GM23248 (cell line): ENCODE measurements at regions of chr10 and their contacts with region 1.

Region 1: GRCh38 chr10:101569838-101570766 is 18.0 kb downstream of the POLL start:
- DNase-seq: peak; percentile 85
- H3K4me3 ChIP-seq: peak overlapping the region; percentile 70
- H3K27ac ChIP-seq: no peak overlapping the region
- H3K4me1 ChIP-seq: no peaks in the 10 kb centered on the region
- H3K27me3 ChIP-seq: peaks cover 30% of the 10 kb centered on the region

Region 2: GRCh38 chr10:101095542-101096213 is 474.4 kb before region 1 on chr10:
- in situ Hi-C with region 1: no loop called
- DNase-seq: peak; percentile 74
- H3K4me3 ChIP-seq: no peak overlapping the region
- H3K27ac ChIP-seq: no peak overlapping the region
- H3K4me1 ChIP-seq: no peaks in the 10 kb centered on the region
- H3K27me3 ChIP-seq: peaks cover 39% of the 10 kb centered on the region

Region 3: GRCh38 chr10:101214446-101215396 is 355.4 kb before region 1 on chr10:
- in situ Hi-C with region 1: loop called (anchors 10 kb)
- DNase-seq: peak; percentile 68
- H3K4me3 ChIP-seq: peak overlapping the region; percentile 65
- H3K27ac ChIP-seq: no peak overlapping the region
- H3K4me1 ChIP-seq: 0 out of 2 replicates have a peak, but pooled peaks cover 5% of the 10 kb centered on the region
- H3K27me3 ChIP-seq: peaks cover 81% of the 10 kb centered on the region